Activated B cell treated with CpG ODN at 0.5 μM for 24 hours (primary cell): ENCODE measurements at regions of chr11 and their contacts with region 1.

Region 1: GRCh38 chr11:74388678-74389327 is 9.4 kb downstream of the PGM2L1 start:
- DNase-seq: no peak
- ATAC-seq: peak; percentile 81
- H3K4me3 Mint-ChIP-seq: no peak overlapping the region
- H3K27ac Mint-ChIP-seq: no peak overlapping the region
- H3K4me1 Mint-ChIP-seq: peaks cover 2% of the 10 kb centered on the region
- H3K27me3 Mint-ChIP-seq: no peaks in the 10 kb centered on the region
- CTCF ChIP-seq: peak; percentile 73

Region 2: DNA sequence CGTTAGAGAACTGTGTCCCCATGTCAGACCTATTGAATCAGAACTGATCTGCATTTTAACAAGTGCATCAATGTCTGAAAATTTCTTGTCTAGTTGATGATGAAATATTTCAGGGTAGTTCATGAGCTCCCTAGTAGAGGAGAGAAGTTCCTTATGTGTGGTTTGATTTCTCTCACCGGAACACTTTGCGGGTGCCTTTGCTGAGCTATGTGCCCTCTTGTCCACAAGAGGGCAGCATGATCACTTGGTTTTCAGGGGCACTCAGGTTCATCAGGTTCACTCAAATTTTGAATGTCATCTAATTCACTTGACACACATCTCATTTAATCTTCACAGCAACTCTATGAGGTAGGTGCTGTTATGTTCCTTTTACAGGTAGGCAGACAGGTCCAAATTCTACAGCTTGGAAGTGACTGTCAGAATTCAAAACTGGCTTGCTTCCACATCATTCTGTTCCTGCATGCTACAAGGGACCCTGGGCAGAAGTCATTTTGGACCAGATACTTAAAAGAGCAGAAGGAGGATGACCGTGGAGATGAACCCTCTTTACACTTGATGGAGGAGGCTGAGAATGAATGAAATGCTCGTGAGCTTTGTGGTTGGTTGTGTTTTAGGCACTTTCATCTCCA is 132.9 kb before region 1 on chr11:
- CTCF ChIA-PET with region 1: interaction called, 7 read pairs
- POLR2A ChIA-PET with region 1: no interaction called
- intact Hi-C with region 1: loop called (anchors 2 kb)
- DNase-seq: no peak
- ATAC-seq: peak; percentile 75
- H3K4me3 Mint-ChIP-seq: no peak overlapping the region
- H3K27ac Mint-ChIP-seq: no peak overlapping the region
- H3K4me1 Mint-ChIP-seq: no peaks in the 10 kb centered on the region
- H3K27me3 Mint-ChIP-seq: no peaks in the 10 kb centered on the region
- CTCF ChIP-seq: peak; percentile 62

Region 3: GRCh38 chr11:74570266-74571061 is 181.7 kb after region 1 on chr11:
- CTCF ChIA-PET with region 1: interaction called, 18 read pairs
- POLR2A ChIA-PET with region 1: no interaction called
- intact Hi-C with region 1: loop called (anchors 1 kb)
- DNase-seq: no peak
- ATAC-seq: peak; percentile 49
- H3K4me3 Mint-ChIP-seq: no peak overlapping the region
- H3K27ac Mint-ChIP-seq: no peak overlapping the region
- H3K4me1 Mint-ChIP-seq: no peaks in the 10 kb centered on the region
- H3K27me3 Mint-ChIP-seq: peaks cover 8% of the 10 kb centered on the region
- CTCF ChIP-seq: no peak